CD4-positive, alpha-beta memory T cell (primary cell): ENCODE measurements at regions of chr5 and their contacts with region 1.

Region 1: DNA sequence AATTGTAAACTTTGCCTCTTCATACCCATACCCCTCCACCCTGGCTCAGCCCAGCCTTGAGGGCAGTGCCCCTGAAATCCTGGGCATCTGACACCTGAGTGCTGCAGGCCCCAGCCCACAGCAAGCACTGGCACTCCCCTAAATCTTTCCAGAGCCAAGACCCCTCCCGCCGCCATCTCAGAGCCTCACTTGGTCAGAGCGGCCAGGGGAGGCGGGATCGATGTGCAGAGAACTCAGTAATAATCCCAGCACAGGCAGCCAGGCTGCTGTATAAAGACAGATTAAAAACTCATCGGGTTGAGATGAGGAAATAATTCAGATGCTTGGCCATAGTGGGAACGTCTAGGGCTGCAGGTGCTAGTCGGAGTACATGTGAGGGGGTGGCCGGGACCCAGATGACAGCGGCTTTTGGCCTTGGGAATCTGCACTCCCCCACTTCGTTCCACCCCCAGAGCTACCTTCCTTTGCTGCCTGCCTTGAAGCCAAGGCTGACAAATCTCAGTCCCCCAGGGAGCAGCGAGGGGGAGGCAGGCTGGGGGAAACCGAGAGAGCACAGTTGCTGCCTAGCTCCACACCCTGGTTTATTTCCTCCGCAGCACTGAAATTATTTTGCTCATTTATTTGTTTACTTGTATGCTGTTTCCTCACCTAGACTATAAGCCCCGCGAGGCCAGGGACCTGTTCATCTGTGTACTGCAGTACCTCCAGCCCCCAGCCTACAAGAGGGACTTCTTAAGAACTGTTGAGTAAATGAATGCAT is 19.5 kb upstream of the ARAP3 start:
- DNase-seq: no peak
- H3K4me3 ChIP-seq: peak overlapping the region in 1 of 2 donors; percentile 57
- H3K4me3 Mint-ChIP-seq: peak overlapping the region in 5 of 8 donors; percentile 78 to 91 (median 87)
- H3K27ac ChIP-seq: no peak overlapping the region
- H3K27ac Mint-ChIP-seq: peak overlapping the region in 5 of 7 donors; percentile 62 to 90 (median 83)
- H3K4me1 ChIP-seq: peaks cover 17% of the 10 kb centered on the region
- H3K4me1 Mint-ChIP-seq: peaks cover 9 to 29% (median 14%) of the 10 kb centered on the region in 4 donors
- H3K27me3 ChIP-seq: peaks cover 7% of the 10 kb centered on the region
- H3K27me3 Mint-ChIP-seq: peaks cover 3 to 13% of the 10 kb centered on the region in 2 donors

Region 2: GRCh38 chr5:141664732-141665461 is 36.6 kb before region 1 on chr5:
- CTCF ChIA-PET with region 1: interaction called, 53 read pairs
- POLR2A ChIA-PET with region 1: interaction called, 3 read pairs
- intact Hi-C with region 1: no loop called
- DNase-seq: peak; percentile 58 to 69 (median 59)
- H3K4me3 ChIP-seq: no peak overlapping the region
- H3K4me3 Mint-ChIP-seq: no peak overlapping the region
- H3K27ac ChIP-seq: no peak overlapping the region
- H3K27ac Mint-ChIP-seq: no peak overlapping the region
- H3K4me1 ChIP-seq: no peaks in the 10 kb centered on the region
- H3K4me1 Mint-ChIP-seq: peaks cover 2 to 5% (median 4%) of the 10 kb centered on the region in 4 donors
- H3K27me3 ChIP-seq: no peaks in the 10 kb centered on the region
- H3K27me3 Mint-ChIP-seq: no peaks in the 10 kb centered on the region

Region 3: GRCh38 chr5:141716009-141716408 is 14.5 kb after region 1 on chr5:
- CTCF ChIA-PET with region 1: interaction called, 18 read pairs
- POLR2A ChIA-PET with region 1: no interaction called
- intact Hi-C with region 1: no loop called
- DNase-seq: no peak
- H3K4me3 ChIP-seq: no peak overlapping the region
- H3K4me3 Mint-ChIP-seq: no peak overlapping the region
- H3K27ac ChIP-seq: no peak overlapping the region
- H3K27ac Mint-ChIP-seq: no peak overlapping the region
- H3K4me1 ChIP-seq: no peaks in the 10 kb centered on the region
- H3K4me1 Mint-ChIP-seq: no peaks in the 10 kb centered on the region
- H3K27me3 ChIP-seq: no peaks in the 10 kb centered on the region
- H3K27me3 Mint-ChIP-seq: peaks cover 7 to 8% of the 10 kb centered on the region in 2 donors

Region 4: DNA sequence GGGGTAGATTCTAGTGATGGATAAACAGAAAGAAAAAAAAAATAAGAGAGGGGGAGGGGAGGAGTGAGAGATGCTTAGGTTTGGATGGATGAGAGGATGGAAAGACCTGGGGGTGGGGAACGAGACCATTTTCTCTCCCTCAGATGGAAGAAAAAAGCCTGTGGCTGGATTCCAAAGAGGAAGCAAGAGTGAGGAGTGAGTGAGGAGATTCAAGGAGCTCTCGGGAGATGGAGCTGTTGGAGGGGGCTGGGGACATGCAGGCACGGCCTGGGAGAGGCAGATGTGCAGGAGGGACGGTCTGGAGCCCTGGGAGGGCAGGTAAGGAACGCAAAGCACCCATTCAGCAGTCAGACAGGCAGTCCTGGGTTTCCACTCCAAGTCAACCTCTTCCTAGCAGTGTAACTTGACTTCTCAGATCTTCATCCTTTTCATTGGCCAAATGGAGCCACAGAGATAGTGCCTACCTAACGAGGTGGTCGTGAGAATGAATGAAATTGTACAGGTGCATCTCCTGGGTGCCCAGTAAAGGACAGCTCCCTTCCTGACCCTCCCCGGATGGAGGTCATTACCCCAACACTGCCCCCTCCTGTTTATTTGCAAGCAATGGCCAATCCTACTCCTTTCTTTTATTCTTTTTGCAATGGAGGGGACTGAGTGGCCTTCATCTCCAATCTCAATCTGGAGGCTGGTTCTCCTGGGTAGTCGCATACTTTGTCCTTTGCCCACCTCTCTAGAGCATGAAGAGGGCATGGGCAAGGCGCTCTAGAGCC is 124.4 kb after region 1 on chr5:
- CTCF ChIA-PET with region 1: interaction called, 33 read pairs
- POLR2A ChIA-PET with region 1: no interaction called
- intact Hi-C with region 1: loop called (anchors 1 kb)
- DNase-seq: peak in 2 of 5 donors; percentile 4 to 7
- H3K4me3 ChIP-seq: no peak overlapping the region
- H3K4me3 Mint-ChIP-seq: no peak overlapping the region
- H3K27ac ChIP-seq: no peak overlapping the region
- H3K27ac Mint-ChIP-seq: no peak overlapping the region
- H3K4me1 ChIP-seq: no peaks in the 10 kb centered on the region
- H3K4me1 Mint-ChIP-seq: peaks cover 0 to 3% (median 0%) of the 10 kb centered on the region in 4 donors
- H3K27me3 ChIP-seq: no peaks in the 10 kb centered on the region
- H3K27me3 Mint-ChIP-seq: peaks cover 4 to 10% of the 10 kb centered on the region in 2 donors

Region 5: GRCh38 chr5:141923448-141924352 is 222.2 kb after region 1 on chr5 and contains the start of gene DELE1:
- CTCF ChIA-PET with region 1: interaction called, 3 read pairs
- POLR2A ChIA-PET with region 1: interaction called, 15 read pairs
- intact Hi-C with region 1: no loop called
- DNase-seq: peak; percentile 89 to 92 (median 92)
- H3K4me3 ChIP-seq: peak within 1 kb of the TSS; percentile 76 to 93
- H3K4me3 Mint-ChIP-seq: peak within 1 kb of the TSS; percentile 87 to 97 (median 92)
- H3K27ac ChIP-seq: peak within 1 kb of the TSS; percentile 99
- H3K27ac Mint-ChIP-seq: peak within 1 kb of the TSS; percentile 95 to 98 (median 97)
- H3K4me1 ChIP-seq: peaks cover 31% of the 10 kb centered on the region
- H3K4me1 Mint-ChIP-seq: peaks cover 14 to 48% (median 34%) of the 10 kb centered on the region in 4 donors
- H3K27me3 ChIP-seq: no peaks in the 10 kb centered on the region
- H3K27me3 Mint-ChIP-seq: no peaks in the 10 kb centered on the region
- total RNA-seq, gene DELE1: 73.2 to 83.1 TPM